MCF 10A (cell line): ENCODE measurements at regions of chr4 and their contacts with region 1.

Region 1: DNA sequence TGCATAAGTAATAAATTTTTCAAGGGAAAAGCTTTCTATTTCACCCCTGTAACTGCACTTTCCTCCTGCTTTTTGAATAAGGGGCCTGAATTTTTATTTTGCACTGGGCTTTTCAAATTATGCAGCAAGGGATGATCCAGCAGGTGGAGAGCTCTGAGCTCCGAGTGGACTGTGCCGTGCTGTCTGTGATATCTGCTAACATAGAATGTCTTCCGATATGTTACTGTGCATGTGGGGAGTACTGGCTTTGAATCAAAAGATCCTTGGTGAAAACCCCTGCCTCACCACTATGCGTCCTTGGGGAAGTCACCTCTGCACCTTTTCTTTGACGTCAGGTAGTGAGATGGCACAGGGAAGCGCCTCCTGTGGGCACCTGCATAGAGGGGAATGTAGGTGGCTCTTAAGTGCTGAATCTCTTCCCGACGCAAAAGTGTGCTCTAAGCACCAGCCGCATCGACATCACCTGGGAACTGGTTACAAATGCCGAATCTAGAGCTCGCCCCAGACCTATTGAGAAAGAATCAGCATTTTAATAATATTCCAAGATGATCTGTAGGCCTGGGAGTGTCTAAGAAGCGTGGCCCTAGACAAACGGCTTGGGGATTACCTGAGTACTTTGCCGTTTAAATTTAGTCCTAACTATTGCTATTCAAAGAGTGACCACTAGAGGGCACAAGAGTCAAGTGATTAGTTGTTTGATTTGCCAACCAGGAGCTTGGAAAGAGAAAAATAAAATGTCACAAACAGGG is 19.2 kb upstream of the WFS1 start:
- DNase-seq: peak; percentile 74
- H3K4me3 Mint-ChIP-seq: no peak overlapping the region
- H3K27ac Mint-ChIP-seq: no peak overlapping the region
- H3K4me1 Mint-ChIP-seq: no peaks in the 10 kb centered on the region
- H3K27me3 Mint-ChIP-seq: peaks cover 18% of the 10 kb centered on the region
- CTCF ChIP-seq: peak; percentile 75

Region 2: GRCh38 chr4:6153874-6154273 is 96.5 kb before region 1 on chr4:
- CTCF ChIA-PET with region 1: no interaction called
- POLR2A ChIA-PET with region 1: no interaction called
- intact Hi-C with region 1: no loop called
- DNase-seq: no peak
- H3K4me3 Mint-ChIP-seq: no peak overlapping the region
- H3K27ac Mint-ChIP-seq: no peak overlapping the region
- H3K4me1 Mint-ChIP-seq: no peaks in the 10 kb centered on the region
- H3K27me3 Mint-ChIP-seq: no peaks in the 10 kb centered on the region
- CTCF ChIP-seq: no peak

Region 3: GRCh38 chr4:6239968-6240367 is 10.4 kb before region 1 on chr4:
- CTCF ChIA-PET with region 1: interaction called, 28 read pairs
- POLR2A ChIA-PET with region 1: no interaction called
- intact Hi-C with region 1: no loop called
- DNase-seq: no peak
- H3K4me3 Mint-ChIP-seq: no peak overlapping the region
- H3K27ac Mint-ChIP-seq: no peak overlapping the region
- H3K4me1 Mint-ChIP-seq: no peaks in the 10 kb centered on the region
- H3K27me3 Mint-ChIP-seq: no peaks in the 10 kb centered on the region
- CTCF ChIP-seq: no peak

Region 4: DNA sequence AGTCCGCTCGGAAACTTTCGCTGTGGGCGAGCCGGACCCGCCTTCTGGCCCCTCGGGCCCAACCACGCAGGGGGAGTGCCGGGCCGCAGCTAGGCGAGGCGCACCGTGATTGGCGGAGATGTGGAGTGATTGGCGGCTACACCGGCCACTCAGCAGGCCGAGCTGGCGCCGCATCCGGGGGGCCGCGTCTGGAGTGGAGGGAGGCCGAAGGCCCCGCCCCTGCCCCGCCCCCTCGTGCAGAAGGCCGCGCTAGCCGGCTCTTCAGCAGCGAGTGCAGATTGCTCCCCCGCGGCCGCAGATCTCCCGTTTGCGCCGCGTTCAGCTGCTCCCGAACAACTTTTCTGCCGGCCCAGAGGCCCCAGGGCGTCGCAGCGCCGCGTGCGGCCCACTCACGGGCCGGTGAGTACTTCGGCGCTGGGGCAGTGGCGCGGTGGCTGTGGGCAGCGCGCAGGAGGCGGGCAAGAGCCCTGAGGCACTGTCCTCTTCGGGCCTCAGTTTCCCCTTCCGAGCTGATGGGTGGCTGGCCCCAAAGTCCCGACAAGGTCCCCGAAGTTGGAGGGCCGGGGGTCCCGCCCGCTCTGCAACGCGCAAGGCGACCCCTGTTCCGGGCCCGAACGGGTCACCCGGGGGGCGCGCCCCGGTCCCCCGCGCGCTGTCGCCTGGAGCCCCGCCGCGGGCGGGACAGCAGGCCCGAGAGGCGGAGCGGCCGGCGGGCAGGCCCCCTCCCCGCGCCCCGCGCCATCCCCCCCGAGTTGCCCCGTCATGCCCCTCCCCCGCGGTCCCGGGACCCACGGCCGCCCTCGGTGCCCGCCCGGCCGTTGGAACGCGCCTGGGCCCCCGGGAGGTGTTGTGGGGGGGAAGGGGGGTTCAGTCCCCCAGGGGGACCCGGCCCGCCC is 19.5 kb after region 1 on chr4 and contains the start of gene WFS1:
- CTCF ChIA-PET with region 1: interaction called, 34 read pairs
- POLR2A ChIA-PET with region 1: interaction called, 4 read pairs
- intact Hi-C with region 1: no loop called
- DNase-seq: peak; percentile 97
- H3K4me3 Mint-ChIP-seq: peak within 1 kb of the TSS; percentile 73
- H3K27ac Mint-ChIP-seq: no peak within 1 kb of the TSS
- H3K4me1 Mint-ChIP-seq: peaks cover 42% of the 10 kb centered on the region
- H3K27me3 Mint-ChIP-seq: peaks cover 17% of the 10 kb centered on the region
- CTCF ChIP-seq: no peak
- total RNA-seq, gene WFS1: 41.7 and 62.4 TPM in 2 replicates

Region 5: GRCh38 chr4:6306299-6306698 is 55.9 kb after region 1 on chr4:
- CTCF ChIA-PET with region 1: interaction called, 14 read pairs
- POLR2A ChIA-PET with region 1: no interaction called
- intact Hi-C with region 1: no loop called
- DNase-seq: no peak
- H3K4me3 Mint-ChIP-seq: no peak overlapping the region
- H3K27ac Mint-ChIP-seq: no peak overlapping the region
- H3K4me1 Mint-ChIP-seq: no peaks in the 10 kb centered on the region
- H3K27me3 Mint-ChIP-seq: no peaks in the 10 kb centered on the region
- CTCF ChIP-seq: no peak

Region 6: GRCh38 chr4:6343950-6344408 is 93.6 kb after region 1 on chr4:
- CTCF ChIA-PET with region 1: interaction called, 10 read pairs
- POLR2A ChIA-PET with region 1: no interaction called
- intact Hi-C with region 1: no loop called
- DNase-seq: peak; percentile 84
- H3K4me3 Mint-ChIP-seq: peak overlapping the region; percentile 19
- H3K27ac Mint-ChIP-seq: peak overlapping the region; percentile 39
- H3K4me1 Mint-ChIP-seq: peaks cover 8% of the 10 kb centered on the region
- H3K27me3 Mint-ChIP-seq: peaks cover 1% of the 10 kb centered on the region
- CTCF ChIP-seq: peak; percentile 43